ENCODE measurements at regions of chr6 and their contacts with region 1.

Region 1: DNA sequence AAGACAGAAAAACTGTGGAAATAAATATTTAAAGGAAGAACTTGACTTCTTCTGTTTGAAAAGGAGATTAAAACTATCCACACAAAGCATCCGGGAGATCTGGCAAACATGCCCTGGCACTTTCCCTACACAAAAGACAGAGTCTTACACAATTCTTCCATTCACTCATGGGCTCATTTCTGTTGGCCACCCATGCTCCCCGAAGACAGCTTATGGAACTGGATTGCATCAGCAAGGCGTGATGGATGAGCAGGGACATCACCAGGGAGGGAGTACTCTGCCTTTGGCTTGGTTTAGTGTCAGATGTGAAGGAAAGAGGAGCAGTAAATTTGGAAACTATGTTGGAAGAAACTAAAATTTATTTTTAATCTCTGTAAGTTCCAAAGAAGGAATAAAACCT is 379.3 kb downstream of the CD109 start:
- DNase-seq: no peak
- H3K4me3 ChIP-seq: no peak overlapping the region
- CTCF ChIP-seq: no peak

Region 2: DNA sequence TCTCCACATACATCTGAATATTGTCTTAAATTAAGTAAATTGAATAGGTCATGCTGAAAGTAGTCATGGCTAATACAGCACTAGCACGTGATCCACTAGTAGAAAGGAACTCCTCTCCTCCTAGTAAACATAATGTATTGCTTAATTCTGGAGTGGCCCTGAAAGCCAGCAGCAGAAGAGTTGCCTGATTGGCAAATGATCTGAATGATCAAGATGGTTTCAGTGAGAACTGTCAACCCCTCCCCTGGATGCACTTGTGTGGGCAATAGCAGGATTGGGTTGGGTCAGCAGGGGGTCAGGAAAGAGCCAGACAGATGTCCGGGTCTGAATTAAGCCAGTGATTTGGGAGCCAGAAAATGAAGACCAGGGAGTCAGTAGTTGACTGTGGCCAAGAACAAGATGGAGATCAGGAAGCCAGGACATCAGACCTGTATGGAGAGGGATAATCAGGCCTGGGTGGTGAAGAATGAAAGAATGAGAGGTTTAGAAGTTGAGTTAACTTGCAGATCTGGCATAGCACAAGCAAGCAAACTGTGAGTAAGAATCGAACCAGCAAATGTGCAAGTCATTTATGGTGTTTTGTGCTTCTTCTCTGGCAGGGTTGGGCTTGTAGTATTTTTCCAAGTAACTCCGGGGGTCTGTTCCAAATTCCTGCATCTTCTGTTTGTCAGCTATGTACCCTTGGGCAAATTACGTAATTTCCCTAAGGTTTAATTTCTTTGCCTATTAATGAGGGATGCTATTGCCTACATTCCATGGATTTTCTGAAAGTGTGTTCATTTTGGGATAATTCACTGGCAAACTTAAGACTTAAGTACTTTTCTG is 74.4 kb before region 1 on chr6:
- in situ Hi-C with region 1: loop called (anchors 5 kb)
- DNase-seq: no peak
- H3K4me3 ChIP-seq: no peak overlapping the region
- CTCF ChIP-seq: no peak

Measured in astrocyte of the cerebellum (primary cell).